ENCODE measurements at regions of chr14 and their contacts with region 1.

Region 1: GRCh38 chr14:86153480-86153879 is 623.5 kb downstream of the FLRT2 start:
- DNase-seq: no peak
- H3K4me3 ChIP-seq: no peak overlapping the region
- H3K27ac ChIP-seq: no peak overlapping the region
- H3K4me1 ChIP-seq: no peaks in the 10 kb centered on the region
- H3K27me3 ChIP-seq: no peaks in the 10 kb centered on the region
- CTCF ChIP-seq: peak in 2 of 3 experiments; percentile 37 to 62; a peak in 3 of 4 replicates
- EP300 ChIP-seq: no peak
- POLR2A ChIP-seq: no peak
- RAD21 ChIP-seq: peak; percentile 34 to 40; a peak in 3 of 4 replicates

Region 2: GRCh38 chr14:86141966-86142365 is 11.5 kb before region 1 on chr14:
- CTCF ChIA-PET with region 1: interaction called, 15 read pairs
- POLR2A ChIA-PET with region 1: no interaction called
- DNase-seq: no peak
- H3K4me3 ChIP-seq: no peak overlapping the region
- H3K27ac ChIP-seq: no peak overlapping the region
- H3K4me1 ChIP-seq: no peaks in the 10 kb centered on the region
- H3K27me3 ChIP-seq: no peaks in the 10 kb centered on the region
- CTCF ChIP-seq: no peak
- EP300 ChIP-seq: no peak
- POLR2A ChIP-seq: no peak
- RAD21 ChIP-seq: no peak

Region 3: DNA sequence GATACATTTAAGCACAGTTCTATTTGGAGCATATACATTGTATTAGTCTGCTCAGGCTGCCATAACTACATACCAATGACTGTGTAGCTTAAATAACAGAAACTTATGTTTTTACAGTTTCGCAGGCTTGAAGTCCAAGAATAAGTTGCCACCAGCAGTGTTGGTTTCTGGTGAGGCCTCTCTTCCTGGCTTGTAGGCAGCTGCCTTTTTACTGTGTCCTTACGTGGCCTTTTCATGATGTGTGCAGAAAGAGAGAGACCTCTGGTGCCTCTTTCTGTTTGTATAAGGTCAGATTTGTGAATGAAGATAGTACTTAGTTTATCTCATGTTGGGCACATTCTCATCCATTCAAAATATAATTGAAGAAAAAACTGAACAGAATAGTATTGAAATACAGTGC is 13.1 kb after region 1 on chr14:
- CTCF ChIA-PET with region 1: interaction called, 19 read pairs
- POLR2A ChIA-PET with region 1: no interaction called
- DNase-seq: no peak
- H3K4me3 ChIP-seq: no peak overlapping the region
- H3K27ac ChIP-seq: no peak overlapping the region
- H3K4me1 ChIP-seq: no peaks in the 10 kb centered on the region
- H3K27me3 ChIP-seq: no peaks in the 10 kb centered on the region
- CTCF ChIP-seq: no peak
- EP300 ChIP-seq: no peak
- POLR2A ChIP-seq: no peak
- RAD21 ChIP-seq: no peak

Measured in H1 (cell line).